CD14-positive monocyte (primary cell): ENCODE measurements at regions of chr7 and their contacts with region 1.

Region 1: GRCh38 chr7:26291699-26292538 is at the start of gene SNX10:
- DNase-seq: peak in 2 of 3 donors; percentile 73 to 77
- H3K4me3 ChIP-seq: peak within 1 kb of the TSS; percentile 96 to 99 (median 97)
- H3K4me3 Mint-ChIP-seq: peak within 1 kb of the TSS; percentile 97
- H3K27ac ChIP-seq: peak within 1 kb of the TSS; percentile 92 to 94
- H3K27ac Mint-ChIP-seq: peak within 1 kb of the TSS; percentile 82 to 98 (median 96)
- H3K4me1 ChIP-seq: peaks cover 52 to 67% of the 10 kb centered on the region in 2 donors
- H3K4me1 Mint-ChIP-seq: peaks cover 56% of the 10 kb centered on the region
- H3K27me3 ChIP-seq: no peaks in the 10 kb centered on the region
- H3K27me3 Mint-ChIP-seq: peaks cover 0 to 1% (median 1%) of the 10 kb centered on the region in 3 donors
- CTCF ChIP-seq: no peak
- polyA plus RNA-seq, gene SNX10: 68.0 to 250 (median 219) TPM

Region 2: GRCh38 chr7:26156454-26157365 is 135.2 kb before region 1 on chr7:
- intact Hi-C with region 1: no loop called
- DNase-seq: peak; percentile 70 to 94 (median 74)
- H3K4me3 ChIP-seq: peak overlapping the region in 2 of 3 experiments; percentile 8 to 35
- H3K4me3 Mint-ChIP-seq: peak overlapping the region; percentile 47 to 60
- H3K27ac ChIP-seq: peak overlapping the region; percentile 33 to 67
- H3K27ac Mint-ChIP-seq: peak overlapping the region; percentile 42 to 92 (median 85)
- H3K4me1 ChIP-seq: peaks cover 35 to 52% of the 10 kb centered on the region in 2 donors
- H3K4me1 Mint-ChIP-seq: peaks cover 40% of the 10 kb centered on the region
- H3K27me3 ChIP-seq: peaks cover 4 to 7% of the 10 kb centered on the region in 2 donors
- H3K27me3 Mint-ChIP-seq: peaks cover 13 to 24% (median 19%) of the 10 kb centered on the region in 3 donors
- CTCF ChIP-seq: no peak

Region 3: DNA sequence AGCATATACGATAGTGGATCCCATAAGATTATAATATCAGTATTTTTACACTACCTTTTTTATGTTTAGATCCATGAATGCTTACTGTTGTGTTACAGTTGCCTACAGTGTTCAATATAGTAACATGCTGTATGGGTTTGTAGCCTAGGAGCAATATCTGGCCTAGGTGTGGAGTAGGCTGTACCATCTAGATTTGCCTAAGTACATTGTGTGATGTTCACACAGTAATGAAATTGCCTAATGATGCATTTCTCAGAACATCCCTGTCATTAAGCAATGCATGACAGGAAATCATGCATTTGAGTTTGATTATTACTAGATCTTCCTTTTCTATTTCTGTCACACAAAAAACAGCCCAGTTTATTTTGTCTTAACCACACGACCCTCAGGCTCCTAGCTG is 75.9 kb before region 1 on chr7:
- intact Hi-C with region 1: no loop called
- DNase-seq: no peak
- H3K4me3 ChIP-seq: no peak overlapping the region
- H3K4me3 Mint-ChIP-seq: no peak overlapping the region
- H3K27ac ChIP-seq: no peak overlapping the region
- H3K27ac Mint-ChIP-seq: no peak overlapping the region
- H3K4me1 ChIP-seq: peaks cover 19 to 21% of the 10 kb centered on the region in 2 donors
- H3K4me1 Mint-ChIP-seq: peaks cover 29% of the 10 kb centered on the region
- H3K27me3 ChIP-seq: no peaks in the 10 kb centered on the region
- H3K27me3 Mint-ChIP-seq: peaks cover 0 to 2% (median 0%) of the 10 kb centered on the region in 3 donors
- CTCF ChIP-seq: no peak

Region 4: DNA sequence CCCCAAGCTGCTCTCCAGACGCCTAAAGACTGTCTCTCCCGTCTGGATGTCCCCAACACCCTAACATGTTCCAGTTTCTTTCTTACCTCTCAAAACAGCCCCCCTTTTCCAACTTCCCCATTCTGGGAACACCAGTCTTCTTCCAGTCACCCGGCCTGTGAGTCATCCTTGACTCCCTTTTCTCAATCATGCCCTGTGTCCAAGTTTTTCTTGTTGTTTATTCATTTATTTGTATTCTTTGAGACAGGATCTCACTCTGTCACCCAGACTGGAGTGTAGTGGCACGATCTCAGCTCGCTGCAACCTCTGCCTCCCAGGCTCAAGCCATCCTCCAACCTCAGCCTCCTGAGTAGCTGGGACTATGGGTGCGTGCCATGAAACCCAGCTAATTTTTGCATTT is 15.3 kb after region 1 on chr7:
- intact Hi-C with region 1: loop called in 1 of 2 experiments (anchors 1 kb)
- DNase-seq: peak; percentile 82 to 97 (median 95)
- H3K4me3 ChIP-seq: peak overlapping the region in 1 of 3 experiments; percentile 67
- H3K4me3 Mint-ChIP-seq: peak overlapping the region; percentile 42 to 87
- H3K27ac ChIP-seq: peak overlapping the region; percentile 95 to 98
- H3K27ac Mint-ChIP-seq: peak overlapping the region; percentile 94 to 99 (median 98)
- H3K4me1 ChIP-seq: peaks cover 87 to 97% of the 10 kb centered on the region in 2 donors
- H3K4me1 Mint-ChIP-seq: peaks cover 95% of the 10 kb centered on the region
- H3K27me3 ChIP-seq: no peaks in the 10 kb centered on the region
- H3K27me3 Mint-ChIP-seq: peaks cover 0 to 3% (median 0%) of the 10 kb centered on the region in 3 donors
- CTCF ChIP-seq: no peak

Region 5: GRCh38 chr7:26318921-26319320 is 27.0 kb after region 1 on chr7:
- intact Hi-C with region 1: no loop called
- DNase-seq: no peak
- H3K4me3 ChIP-seq: peak overlapping the region in 1 of 3 experiments; percentile 46
- H3K4me3 Mint-ChIP-seq: peak overlapping the region in 1 of 2 donors; percentile 78
- H3K27ac ChIP-seq: peak overlapping the region in 1 of 2 donors; percentile 81
- H3K27ac Mint-ChIP-seq: peak overlapping the region; percentile 16 to 89 (median 82)
- H3K4me1 ChIP-seq: peaks cover 70 to 75% of the 10 kb centered on the region in 2 donors
- H3K4me1 Mint-ChIP-seq: peaks cover 84% of the 10 kb centered on the region
- H3K27me3 ChIP-seq: no peaks in the 10 kb centered on the region
- H3K27me3 Mint-ChIP-seq: no peaks in the 10 kb centered on the region
- CTCF ChIP-seq: peak; percentile 21

Region 6: DNA sequence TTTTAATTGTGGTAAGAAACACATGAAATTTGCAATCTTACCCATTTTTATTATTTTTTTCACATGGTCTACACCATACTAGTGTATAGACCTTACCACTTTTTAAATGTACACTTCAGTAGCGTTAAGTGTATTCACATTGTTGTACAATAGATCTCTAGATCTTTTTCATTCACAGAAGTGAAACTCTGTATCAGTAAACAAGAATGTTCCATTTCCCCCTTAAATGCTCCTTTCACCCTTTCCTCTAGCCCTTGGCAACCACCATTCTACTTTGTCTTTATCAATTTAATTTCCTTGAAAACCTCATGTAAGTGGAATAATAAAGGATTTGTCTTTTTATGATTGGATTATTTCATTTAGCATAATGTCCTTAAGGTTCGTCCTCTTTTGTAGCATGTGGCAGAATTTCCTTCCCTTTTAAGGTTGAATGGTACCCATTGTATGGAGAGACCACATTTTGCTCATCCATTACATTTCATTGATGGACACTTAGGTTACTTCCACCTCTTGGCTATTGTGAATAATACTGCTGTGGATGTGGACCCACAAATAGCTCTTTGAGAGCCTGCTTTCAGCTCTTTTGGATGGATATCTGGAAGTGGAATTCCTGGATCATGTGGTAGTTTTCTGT is 45.4 kb after region 1 on chr7:
- intact Hi-C with region 1: loop called (anchors 5 to 10 kb)
- DNase-seq: no peak
- H3K4me3 ChIP-seq: peak overlapping the region in 1 of 3 experiments; percentile 33
- H3K4me3 Mint-ChIP-seq: peak overlapping the region in 1 of 2 donors; percentile 56
- H3K27ac ChIP-seq: peak overlapping the region in 1 of 2 donors; percentile 64
- H3K27ac Mint-ChIP-seq: peak overlapping the region in 5 of 7 donors; percentile 4 to 84 (median 44)
- H3K4me1 ChIP-seq: peaks cover 54 to 62% of the 10 kb centered on the region in 2 donors
- H3K4me1 Mint-ChIP-seq: peaks cover 67% of the 10 kb centered on the region
- H3K27me3 ChIP-seq: no peaks in the 10 kb centered on the region
- H3K27me3 Mint-ChIP-seq: peaks cover 0 to 1% (median 0%) of the 10 kb centered on the region in 3 donors
- CTCF ChIP-seq: no peak

Region 7: GRCh38 chr7:26356929-26357798 is 65.2 kb after region 1 on chr7:
- intact Hi-C with region 1: loop called in 1 of 2 experiments (anchors 5 kb)
- DNase-seq: no peak
- H3K4me3 ChIP-seq: no peak overlapping the region
- H3K4me3 Mint-ChIP-seq: no peak overlapping the region
- H3K27ac ChIP-seq: peak overlapping the region in 1 of 2 donors; percentile 26
- H3K27ac Mint-ChIP-seq: peak overlapping the region in 2 of 7 donors; percentile 27 to 38
- H3K4me1 ChIP-seq: peaks cover 16 to 22% of the 10 kb centered on the region in 2 donors
- H3K4me1 Mint-ChIP-seq: peaks cover 30% of the 10 kb centered on the region
- H3K27me3 ChIP-seq: no peaks in the 10 kb centered on the region
- H3K27me3 Mint-ChIP-seq: no peaks in the 10 kb centered on the region
- CTCF ChIP-seq: no peak

Region 8: DNA sequence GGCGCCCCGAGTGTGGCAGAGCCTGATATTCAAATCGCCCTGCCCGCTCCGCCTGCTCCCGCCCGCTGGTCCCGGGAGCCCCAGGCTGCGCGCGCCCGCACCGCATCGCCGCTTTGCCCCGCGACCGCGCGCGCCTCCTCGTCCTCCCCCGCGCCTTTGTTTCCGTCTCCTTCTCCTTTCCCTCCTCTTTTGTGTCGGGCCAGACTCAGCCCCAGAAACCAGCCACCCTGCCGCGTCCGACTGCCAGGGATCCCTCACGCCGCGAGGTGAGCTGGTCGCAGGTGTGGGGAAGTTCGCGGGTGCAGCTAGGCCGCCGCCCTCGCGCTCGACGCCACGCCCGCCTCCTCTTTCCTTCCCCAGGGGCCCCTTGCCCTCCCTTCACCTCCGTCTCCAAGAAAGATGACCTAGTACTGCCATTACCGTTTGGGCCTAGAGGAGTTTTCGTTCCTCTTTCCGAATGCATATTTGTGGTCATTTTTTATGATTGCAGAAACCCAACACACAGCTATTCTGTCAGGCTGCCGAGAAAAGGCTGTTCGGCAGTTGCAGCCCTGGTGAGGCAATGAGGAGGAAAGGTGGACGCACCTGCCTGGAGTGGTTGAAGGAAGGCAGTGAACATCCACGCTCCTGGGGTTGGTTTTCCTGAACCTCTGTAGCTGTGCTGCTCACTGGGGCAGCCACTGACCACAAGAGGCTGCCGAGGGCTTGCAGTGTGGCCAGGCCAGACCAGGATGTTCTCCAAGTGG is 107.0 kb after region 1 on chr7:
- intact Hi-C with region 1: no loop called
- DNase-seq: peak; percentile 61 to 73 (median 65)
- H3K4me3 ChIP-seq: peak overlapping the region; percentile 54 to 84 (median 65)
- H3K4me3 Mint-ChIP-seq: peak overlapping the region; percentile 95 to 97
- H3K27ac ChIP-seq: peak overlapping the region; percentile 72 to 75
- H3K27ac Mint-ChIP-seq: peak overlapping the region; percentile 89 to 98 (median 96)
- H3K4me1 ChIP-seq: peaks cover 16 to 20% of the 10 kb centered on the region in 2 donors
- H3K4me1 Mint-ChIP-seq: peaks cover 14% of the 10 kb centered on the region
- H3K27me3 ChIP-seq: peaks cover 2% of the 10 kb centered on the region in 2 donors
- H3K27me3 Mint-ChIP-seq: peaks cover 6 to 10% (median 8%) of the 10 kb centered on the region in 3 donors
- CTCF ChIP-seq: no peak